MCF 10A (cell line): ENCODE measurements at regions of chr14 and their contacts with region 1.

Region 1: GRCh38 chr14:75230140-75231045 is 48.2 kb upstream of the FOS start:
- DNase-seq: peak; percentile 98
- H3K4me3 Mint-ChIP-seq: peak overlapping the region; percentile 45
- H3K27ac Mint-ChIP-seq: peak overlapping the region; percentile 94
- H3K4me1 Mint-ChIP-seq: peaks cover 44% of the 10 kb centered on the region
- H3K27me3 Mint-ChIP-seq: no peaks in the 10 kb centered on the region
- CTCF ChIP-seq: peak; percentile 29

Region 2: GRCh38 chr14:75147423-75148071 is 82.8 kb before region 1 on chr14:
- CTCF ChIA-PET with region 1: no interaction called
- POLR2A ChIA-PET with region 1: interaction called, 3 read pairs
- intact Hi-C with region 1: loop called (anchors 1 kb)
- DNase-seq: peak; percentile 38
- H3K4me3 Mint-ChIP-seq: peak overlapping the region; percentile 66
- H3K27ac Mint-ChIP-seq: peak overlapping the region; percentile 91
- H3K4me1 Mint-ChIP-seq: peaks cover 60% of the 10 kb centered on the region
- H3K27me3 Mint-ChIP-seq: no peaks in the 10 kb centered on the region
- CTCF ChIP-seq: peak; percentile 32

Region 3: GRCh38 chr14:75188520-75189268 is 41.7 kb before region 1 on chr14:
- CTCF ChIA-PET with region 1: no interaction called
- POLR2A ChIA-PET with region 1: no interaction called
- intact Hi-C with region 1: no loop called
- DNase-seq: no peak
- H3K4me3 Mint-ChIP-seq: no peak overlapping the region
- H3K27ac Mint-ChIP-seq: no peak overlapping the region
- H3K4me1 Mint-ChIP-seq: peaks cover 6% of the 10 kb centered on the region
- H3K27me3 Mint-ChIP-seq: no peaks in the 10 kb centered on the region
- CTCF ChIP-seq: no peak

Region 4: DNA sequence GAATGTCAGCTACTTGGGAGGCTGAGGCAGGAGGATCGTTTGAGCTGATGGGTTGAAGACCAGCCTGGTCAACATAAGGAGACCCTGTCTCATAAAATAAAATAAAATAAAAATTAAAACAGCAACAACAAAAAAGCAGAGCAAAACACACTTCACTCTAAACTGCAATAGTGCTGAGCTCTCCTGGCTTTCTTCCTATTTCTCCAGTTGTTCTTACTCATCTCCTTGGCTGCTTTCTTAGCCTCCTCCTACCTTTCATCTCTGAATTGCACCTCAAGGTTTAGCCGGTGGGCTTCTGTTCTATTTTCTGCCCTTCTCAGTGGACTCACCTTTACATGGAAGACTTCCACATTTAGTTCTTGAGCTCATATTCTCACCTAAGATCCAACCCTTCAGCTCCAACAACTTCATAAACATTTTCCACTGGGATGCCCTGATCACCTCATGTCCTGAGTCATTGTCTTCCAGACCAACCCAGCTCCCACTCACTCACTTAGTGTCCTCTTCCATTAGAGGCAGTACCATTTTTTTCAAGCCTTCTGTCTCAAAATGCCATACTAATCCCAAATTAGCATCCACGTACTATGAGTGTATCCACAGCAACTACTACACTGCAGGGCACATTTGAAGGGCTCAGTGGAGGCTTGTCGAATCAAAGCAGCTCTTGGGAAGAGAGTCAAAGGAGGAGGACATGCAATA is 12.7 kb before region 1 on chr14:
- CTCF ChIA-PET with region 1: interaction called, 11 read pairs
- POLR2A ChIA-PET with region 1: interaction called, 7 read pairs
- intact Hi-C with region 1: no loop called
- DNase-seq: no peak
- H3K4me3 Mint-ChIP-seq: no peak overlapping the region
- H3K27ac Mint-ChIP-seq: no peak overlapping the region
- H3K4me1 Mint-ChIP-seq: peaks cover 19% of the 10 kb centered on the region
- H3K27me3 Mint-ChIP-seq: no peaks in the 10 kb centered on the region
- CTCF ChIP-seq: no peak

Region 5: DNA sequence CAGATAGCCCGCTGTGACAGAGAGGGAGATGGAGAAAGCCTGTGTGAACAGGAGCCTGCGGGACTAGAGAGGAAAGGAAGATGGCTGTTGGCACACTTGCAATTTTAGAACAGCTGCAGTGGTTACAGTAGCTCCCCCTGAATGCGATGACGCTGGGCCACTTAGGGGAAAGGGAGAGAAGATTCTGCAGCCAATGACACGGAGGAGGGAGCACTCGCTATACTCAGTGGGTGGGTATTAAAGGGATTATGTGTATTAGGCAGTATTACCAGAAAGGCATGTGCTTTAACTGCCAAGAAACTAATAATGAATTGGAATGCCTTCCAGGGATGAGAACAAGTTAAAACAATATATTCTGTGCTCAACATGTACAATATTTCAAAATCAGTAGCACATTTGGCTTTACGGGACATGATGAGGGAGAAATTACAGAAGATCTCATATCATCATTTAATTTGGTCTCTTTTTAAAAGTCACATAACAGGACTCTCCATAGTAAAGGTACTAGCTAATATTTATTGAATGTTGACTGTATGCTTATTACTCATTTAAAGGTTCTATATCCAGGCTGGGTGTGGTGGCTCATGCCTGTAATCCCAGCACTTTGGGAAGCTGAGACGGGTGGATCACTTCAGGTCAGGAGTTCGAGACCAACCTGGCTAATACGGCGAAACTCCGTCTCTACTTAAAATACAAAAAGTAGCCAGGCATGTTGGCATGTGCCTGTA is 12.3 kb after region 1 on chr14:
- CTCF ChIA-PET with region 1: interaction called, 4 read pairs
- POLR2A ChIA-PET with region 1: interaction called, 49 read pairs
- intact Hi-C with region 1: no loop called
- DNase-seq: peak; percentile 95
- H3K4me3 Mint-ChIP-seq: peak overlapping the region; percentile 2
- H3K27ac Mint-ChIP-seq: peak overlapping the region; percentile 57
- H3K4me1 Mint-ChIP-seq: peaks cover 10% of the 10 kb centered on the region
- H3K27me3 Mint-ChIP-seq: no peaks in the 10 kb centered on the region
- CTCF ChIP-seq: no peak

Region 6: GRCh38 chr14:75522224-75522982 is 292.0 kb after region 1 on chr14 and contains the start of gene BATF:
- CTCF ChIA-PET with region 1: no interaction called
- POLR2A ChIA-PET with region 1: no interaction called
- intact Hi-C with region 1: no loop called
- DNase-seq: no peak
- H3K4me3 Mint-ChIP-seq: no peak within 1 kb of the TSS
- H3K27ac Mint-ChIP-seq: peak within 1 kb of the TSS; percentile 67
- H3K4me1 Mint-ChIP-seq: peaks cover 7% of the 10 kb centered on the region
- H3K27me3 Mint-ChIP-seq: no peaks in the 10 kb centered on the region
- CTCF ChIP-seq: no peak
- total RNA-seq, gene BATF: not detected in 2 replicates